Posterior vena cava (tissue), 2 donors: ENCODE measurements at regions of chr1 and their contacts with region 1.

Region 1: GRCh38 chr1:5992026-5992813 is at the start of gene NPHP4:
- DNase-seq: peak; percentile 100
- total RNA-seq, gene NPHP4: 6.9 to 7.7 TPM

Region 2: DNA sequence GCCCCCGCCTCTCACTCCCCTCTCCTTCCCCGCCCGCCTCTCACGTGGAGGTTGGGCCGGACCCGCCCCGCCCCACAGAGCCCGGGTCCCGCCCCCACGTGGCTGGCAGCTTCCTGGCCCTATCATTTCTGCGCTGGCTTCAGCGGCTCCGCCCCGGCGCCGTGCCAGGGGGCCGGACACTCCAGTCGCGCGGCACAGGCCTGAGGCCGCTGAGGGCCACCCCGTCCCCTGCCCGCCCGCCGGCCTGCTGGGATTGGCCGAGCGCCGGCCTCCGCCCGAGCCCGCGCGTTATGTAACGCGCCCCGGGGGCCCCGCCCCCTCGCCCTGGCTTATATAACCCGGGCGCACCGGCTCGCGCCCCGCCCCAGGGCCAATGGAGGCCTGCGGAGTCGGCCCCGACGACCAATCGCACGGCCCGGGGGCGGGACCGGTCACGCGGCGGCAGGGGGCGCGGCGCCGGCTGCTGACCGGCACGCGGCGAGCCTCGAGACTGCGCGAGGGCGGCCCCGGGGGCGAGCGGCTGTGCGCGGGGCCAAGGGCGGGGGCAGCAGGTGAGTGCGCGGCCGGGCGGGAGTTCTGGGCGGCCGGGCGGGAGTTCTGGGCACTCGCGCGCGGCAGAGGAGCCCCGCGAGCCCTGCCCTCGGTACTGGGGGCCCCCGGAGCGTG is 1791.7 kb after region 1 on chr1 and contains the start of gene PER3:
- intact Hi-C with region 1: loop called in 1 of 2 experiments (anchors 5 kb)
- DNase-seq: peak; percentile 99
- total RNA-seq, gene PER3: 11.3 to 19.0 TPM